BJ (cell line): ENCODE measurements at regions of chr1 and their contacts with region 1.

Region 1: GRCh38 chr1:186858923-186859322 is 30.2 kb downstream of the PLA2G4A start:
- DNase-seq: no peak
- H3K4me3 ChIP-seq: no peak overlapping the region
- H3K27me3 ChIP-seq: no peaks in the 10 kb centered on the region; the same call in 1 of the 2 replicates
- CTCF ChIP-seq: no peak

Region 2: DNA sequence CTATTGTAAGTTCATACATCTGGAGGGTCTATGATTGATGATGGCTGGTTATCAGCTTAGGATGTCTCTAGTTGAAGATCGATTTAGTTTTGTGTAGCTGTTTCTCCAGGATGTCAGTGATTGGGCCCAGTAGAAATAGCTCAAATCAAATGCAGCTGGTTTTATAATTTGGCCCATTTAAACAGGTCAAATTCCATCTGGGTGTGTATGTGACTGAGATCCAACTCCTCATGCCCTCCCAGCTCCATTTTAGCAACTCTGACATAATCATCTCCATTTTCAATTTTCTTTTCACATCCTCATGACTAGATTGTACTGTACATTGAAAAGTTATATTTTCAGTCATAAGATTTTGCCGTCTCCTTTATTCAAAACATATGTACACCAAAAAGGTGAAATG is 583.1 kb before region 1 on chr1:
- CTCF ChIA-PET with region 1: no interaction called
- POLR2A ChIA-PET with region 1: interaction called, 11 read pairs
- DNase-seq: no peak
- H3K4me3 ChIP-seq: no peak overlapping the region
- H3K27me3 ChIP-seq: no peaks in the 10 kb centered on the region
- CTCF ChIP-seq: no peak

Region 3: DNA sequence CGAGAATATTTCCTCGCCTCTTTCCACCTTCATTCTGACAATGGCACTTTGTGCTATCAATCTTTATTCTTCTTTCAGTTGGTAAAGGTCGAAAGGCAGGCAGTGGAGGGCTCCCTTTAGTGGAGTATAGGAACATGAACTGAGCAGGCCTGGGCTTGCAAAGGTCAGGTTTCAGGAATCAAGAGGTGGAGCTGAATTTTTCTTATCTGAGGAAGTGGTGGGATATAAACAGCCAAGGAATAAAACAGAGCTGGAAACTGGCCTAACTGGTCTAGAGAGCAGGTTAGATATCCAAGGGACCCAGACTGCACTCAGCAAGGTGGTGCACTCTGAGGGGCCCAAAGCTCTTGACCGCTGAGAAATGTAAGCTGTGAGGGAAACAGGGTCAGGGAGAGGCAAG is 69.0 kb after region 1 on chr1:
- CTCF ChIA-PET with region 1: no interaction called
- POLR2A ChIA-PET with region 1: no interaction called
- DNase-seq: no peak
- H3K4me3 ChIP-seq: no peak overlapping the region
- H3K27me3 ChIP-seq: no peaks in the 10 kb centered on the region
- CTCF ChIP-seq: no peak